Activated CD8-positive, alpha-beta T cell treated with anti-CD3 and anti-CD28 coated beads, Interleukin-2, amount 10 ng/mL, durations not matched to agents 7 days and 5 days (primary cell): ENCODE measurements at regions of chr18 and their contacts with region 1.

Region 1: DNA sequence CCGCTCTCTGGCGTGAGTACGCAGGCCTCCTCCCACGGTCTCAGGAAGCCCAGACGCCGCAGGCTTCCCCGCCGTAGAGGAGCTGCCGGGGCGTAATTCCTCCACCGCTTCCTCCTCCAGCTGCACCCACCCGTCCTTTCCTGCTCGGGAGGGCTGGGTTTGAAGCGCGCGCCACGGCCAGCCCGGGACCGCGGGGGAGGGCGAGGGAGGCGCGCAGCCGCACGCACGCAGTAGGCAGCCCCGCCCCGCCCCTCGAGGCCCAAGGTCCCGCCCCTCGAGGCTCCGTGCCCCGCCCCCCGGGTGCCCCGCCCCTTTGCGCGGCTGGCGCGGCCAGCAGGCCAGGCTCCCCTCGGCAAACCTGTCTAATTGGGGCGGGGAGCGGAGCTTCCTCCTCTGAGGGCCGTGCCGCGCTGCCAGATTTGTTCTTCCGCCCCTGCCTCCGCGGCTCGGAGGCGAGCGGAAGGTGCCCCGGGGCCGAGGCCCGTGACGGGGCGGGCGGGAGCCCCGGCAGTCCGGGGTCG is at the start of gene MALT1:
- DNase-seq: peak; percentile 96
- ATAC-seq: peak; percentile 92
- H3K4me3 Mint-ChIP-seq: peak within 1 kb of the TSS; percentile 98
- H3K27ac Mint-ChIP-seq: peak within 1 kb of the TSS; percentile 97
- H3K4me1 Mint-ChIP-seq: peaks cover 56% of the 10 kb centered on the region
- H3K27me3 Mint-ChIP-seq: no peaks in the 10 kb centered on the region
- total RNA-seq, gene MALT1: 52.7 to 57.1 TPM

Region 2: DNA sequence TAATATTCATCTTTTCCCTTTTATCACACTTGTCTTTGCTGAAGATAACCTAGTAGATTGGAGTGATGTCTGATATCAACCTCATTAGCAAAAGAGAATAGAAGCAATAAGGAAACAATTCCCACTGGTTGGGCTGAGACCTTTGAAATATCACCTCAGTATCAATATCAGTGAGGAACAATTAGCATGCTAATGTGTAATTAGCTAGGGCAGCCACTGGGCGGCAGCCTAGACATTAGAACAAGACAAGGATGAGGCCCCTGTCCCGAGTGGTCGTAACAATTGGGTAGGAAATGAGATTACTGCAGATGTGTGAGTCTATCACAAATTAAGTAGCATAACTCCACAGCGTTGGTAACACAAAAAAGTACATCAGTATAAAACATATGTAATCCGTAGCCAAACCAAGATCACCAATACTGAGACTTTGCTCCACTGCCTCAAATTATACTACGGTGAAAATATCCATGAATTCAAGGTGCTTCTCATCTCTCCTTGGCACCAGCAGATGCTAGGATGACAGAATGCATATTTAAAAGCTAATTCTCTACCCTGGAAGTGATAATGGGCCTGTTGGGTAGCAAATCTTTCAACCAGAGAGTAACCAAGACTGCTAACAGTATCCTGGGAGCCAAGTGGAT is 141.3 kb before region 1 on chr18:
- CTCF ChIA-PET with region 1: interaction called, 11 read pairs
- POLR2A ChIA-PET with region 1: interaction called, 6 read pairs
- DNase-seq: peak; percentile 76
- ATAC-seq: no peak
- H3K4me3 Mint-ChIP-seq: no peak overlapping the region
- H3K27ac Mint-ChIP-seq: no peak overlapping the region
- H3K4me1 Mint-ChIP-seq: peaks cover 10% of the 10 kb centered on the region
- H3K27me3 Mint-ChIP-seq: peaks cover 21% of the 10 kb centered on the region

Region 3: DNA sequence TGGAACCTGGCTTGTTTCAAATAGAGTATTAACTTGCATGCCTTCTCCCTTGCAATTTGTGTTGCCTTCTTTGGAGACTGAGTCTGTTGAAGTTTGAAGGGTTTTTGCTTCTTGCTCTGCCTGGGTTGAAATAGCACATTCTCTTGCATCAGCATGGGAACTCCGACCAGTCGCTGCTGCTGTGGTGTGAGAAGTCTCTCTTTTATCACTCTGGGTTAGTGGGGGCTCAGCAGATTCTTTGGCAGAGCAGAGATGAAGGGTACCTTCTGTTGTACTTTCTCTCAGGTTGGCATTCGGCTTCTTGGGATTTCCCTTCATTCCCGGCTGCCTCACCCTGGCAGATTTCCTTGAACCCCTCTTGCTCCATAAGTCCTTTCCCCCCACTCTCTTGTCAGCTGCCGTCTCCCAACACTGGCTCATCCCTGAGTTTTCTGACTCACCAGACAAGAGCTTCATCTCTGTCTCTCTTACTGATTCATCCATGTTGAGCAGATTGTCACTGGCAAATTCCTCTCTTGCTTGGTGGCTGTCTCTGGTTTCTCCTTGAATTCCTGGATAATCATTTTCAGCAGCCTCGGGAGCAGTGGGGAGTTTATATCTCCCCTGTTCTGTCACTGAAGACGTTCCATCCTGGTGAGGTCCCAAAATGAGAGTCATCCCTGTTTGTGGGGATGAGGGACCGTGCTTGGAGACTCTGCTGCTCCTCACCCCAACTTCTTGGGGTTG is 92.2 kb before region 1 on chr18:
- CTCF ChIA-PET with region 1: no interaction called
- POLR2A ChIA-PET with region 1: no interaction called
- DNase-seq: no peak
- ATAC-seq: no peak
- H3K4me3 Mint-ChIP-seq: no peak overlapping the region
- H3K27ac Mint-ChIP-seq: no peak overlapping the region
- H3K4me1 Mint-ChIP-seq: peaks cover 6% of the 10 kb centered on the region
- H3K27me3 Mint-ChIP-seq: peaks cover 6% of the 10 kb centered on the region

Region 4: DNA sequence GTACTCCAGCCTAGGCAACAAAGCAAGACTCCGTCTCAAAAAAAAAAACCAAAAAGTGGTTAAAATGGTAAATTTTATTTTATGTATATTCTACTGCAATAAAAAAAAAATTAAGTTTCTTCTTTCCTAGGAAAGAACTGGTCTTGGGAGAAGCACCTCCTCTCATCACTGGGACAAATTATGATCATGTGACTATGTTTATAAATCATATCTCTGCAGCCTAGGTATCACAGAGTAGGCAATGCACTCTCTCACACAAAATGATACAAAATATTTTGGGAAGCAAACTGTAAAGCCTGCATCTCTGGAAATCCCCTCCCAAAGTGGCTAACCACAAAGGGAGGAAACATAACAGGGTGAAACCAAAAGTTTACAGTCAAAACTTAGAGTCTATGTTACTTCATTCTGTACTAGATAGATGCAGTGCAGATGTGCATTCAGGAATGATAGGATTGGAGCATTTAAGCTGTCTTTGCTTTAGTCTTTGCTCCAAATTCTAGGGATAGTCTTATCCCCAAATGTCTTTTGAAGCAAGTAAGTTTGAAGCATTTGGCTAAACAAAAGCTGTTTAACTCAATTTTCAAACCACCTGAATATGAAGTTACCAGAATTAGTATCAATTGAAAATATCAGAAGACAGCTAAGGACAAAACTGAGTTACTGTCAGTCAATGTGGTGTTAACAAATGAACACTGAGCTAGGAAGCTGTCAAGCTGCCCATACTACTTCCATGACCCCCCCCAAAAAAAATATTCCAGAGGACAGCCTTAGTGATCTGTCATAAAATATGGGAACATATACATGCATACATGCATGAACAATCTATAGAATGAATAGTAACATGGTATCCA is 21.0 kb before region 1 on chr18:
- CTCF ChIA-PET with region 1: interaction called, 7 read pairs
- POLR2A ChIA-PET with region 1: interaction called, 85 read pairs
- DNase-seq: peak; percentile 53
- ATAC-seq: peak; percentile 86
- H3K4me3 Mint-ChIP-seq: peak overlapping the region; percentile 38
- H3K27ac Mint-ChIP-seq: peak overlapping the region; percentile 54
- H3K4me1 Mint-ChIP-seq: peaks cover 46% of the 10 kb centered on the region
- H3K27me3 Mint-ChIP-seq: no peaks in the 10 kb centered on the region

Region 5: DNA sequence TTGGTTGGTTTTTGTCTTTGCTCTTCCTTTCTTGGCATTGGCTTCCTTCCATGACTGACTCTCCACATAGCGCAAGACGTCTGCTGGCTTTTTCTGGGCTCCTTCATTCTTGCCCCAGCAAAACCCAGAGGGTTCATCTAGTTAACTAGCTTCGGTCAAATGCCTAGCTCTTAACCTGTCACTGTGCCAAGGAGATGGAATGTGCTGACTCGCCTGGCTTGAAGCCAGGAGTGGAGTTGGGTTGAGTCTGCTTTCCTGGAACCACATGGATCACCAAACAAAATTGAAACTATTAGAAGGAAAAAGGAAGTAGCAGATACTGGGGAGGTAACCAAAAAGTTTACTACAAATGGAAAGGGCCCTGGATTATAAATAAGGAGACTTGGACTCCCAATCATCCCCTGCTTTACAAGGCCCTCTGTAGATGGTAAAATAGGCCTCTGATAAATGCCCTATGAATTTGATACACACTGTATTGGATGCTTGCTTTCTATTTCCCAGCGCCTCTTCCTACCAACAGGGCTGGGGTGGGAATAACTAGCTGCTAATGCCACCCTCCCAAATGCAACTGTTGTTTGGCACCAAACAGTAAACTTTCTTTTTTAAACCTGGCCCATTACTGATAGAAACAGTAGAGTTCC is 11.4 kb after region 1 on chr18:
- CTCF ChIA-PET with region 1: interaction called, 6 read pairs
- POLR2A ChIA-PET with region 1: interaction called, 75 read pairs
- DNase-seq: no peak
- ATAC-seq: no peak
- H3K4me3 Mint-ChIP-seq: no peak overlapping the region
- H3K27ac Mint-ChIP-seq: no peak overlapping the region
- H3K4me1 Mint-ChIP-seq: peaks cover 40% of the 10 kb centered on the region
- H3K27me3 Mint-ChIP-seq: no peaks in the 10 kb centered on the region

Region 6: DNA sequence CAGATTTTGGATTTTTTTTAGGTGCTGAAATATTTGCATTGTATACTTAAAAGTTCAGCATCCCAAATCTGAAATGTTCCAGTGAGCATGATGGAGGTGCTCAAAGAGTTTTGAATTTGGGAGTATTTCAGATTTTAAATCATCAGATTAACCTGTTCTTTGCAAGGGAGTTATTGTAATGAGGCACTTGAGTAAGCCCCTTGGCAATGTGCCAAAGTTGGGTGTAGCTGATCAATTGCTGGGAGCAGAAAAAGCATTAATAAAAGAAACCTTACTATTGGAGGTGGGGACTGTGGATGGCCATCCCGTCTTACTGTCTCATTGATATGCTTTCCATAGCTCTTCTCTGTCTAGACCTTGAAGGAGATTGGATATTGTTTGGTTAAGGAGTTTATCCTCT is 28.4 kb after region 1 on chr18:
- CTCF ChIA-PET with region 1: interaction called, 5 read pairs
- POLR2A ChIA-PET with region 1: interaction called, 15 read pairs
- DNase-seq: no peak
- ATAC-seq: no peak
- H3K4me3 Mint-ChIP-seq: no peak overlapping the region
- H3K27ac Mint-ChIP-seq: no peak overlapping the region
- H3K4me1 Mint-ChIP-seq: peaks cover 35% of the 10 kb centered on the region
- H3K27me3 Mint-ChIP-seq: no peaks in the 10 kb centered on the region

Region 7: DNA sequence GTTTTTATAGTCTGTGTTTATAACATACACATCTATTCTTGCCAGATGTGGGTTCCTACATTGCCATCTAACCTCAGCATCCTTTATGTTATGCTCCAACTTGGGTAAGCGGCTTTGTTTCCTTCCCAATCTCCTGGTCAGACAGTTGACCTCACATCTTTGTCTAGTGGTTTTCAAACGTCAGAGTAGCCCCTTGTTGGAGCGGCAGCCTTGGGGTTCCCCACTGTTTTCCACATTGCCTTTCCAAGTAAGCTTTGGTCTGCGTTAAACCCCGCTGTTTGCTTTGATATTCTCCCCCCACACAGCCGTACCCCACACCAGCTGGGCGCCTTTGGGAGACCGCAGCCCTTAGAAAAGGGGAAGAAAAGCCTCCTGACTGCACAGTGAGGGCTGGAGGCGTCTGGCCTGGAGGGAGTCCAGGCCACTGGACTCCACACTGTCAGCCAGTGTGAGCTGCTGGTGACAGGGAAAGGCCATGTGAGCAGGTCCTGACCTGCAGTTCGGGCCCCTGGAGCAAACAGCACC is 83.4 kb after region 1 on chr18:
- CTCF ChIA-PET with region 1: no interaction called
- POLR2A ChIA-PET with region 1: interaction called, 10 read pairs
- DNase-seq: no peak
- ATAC-seq: peak; percentile 49
- H3K4me3 Mint-ChIP-seq: peak overlapping the region; percentile 23
- H3K27ac Mint-ChIP-seq: peak overlapping the region; percentile 75
- H3K4me1 Mint-ChIP-seq: peaks cover 43% of the 10 kb centered on the region
- H3K27me3 Mint-ChIP-seq: peaks cover 3% of the 10 kb centered on the region

Region 8: DNA sequence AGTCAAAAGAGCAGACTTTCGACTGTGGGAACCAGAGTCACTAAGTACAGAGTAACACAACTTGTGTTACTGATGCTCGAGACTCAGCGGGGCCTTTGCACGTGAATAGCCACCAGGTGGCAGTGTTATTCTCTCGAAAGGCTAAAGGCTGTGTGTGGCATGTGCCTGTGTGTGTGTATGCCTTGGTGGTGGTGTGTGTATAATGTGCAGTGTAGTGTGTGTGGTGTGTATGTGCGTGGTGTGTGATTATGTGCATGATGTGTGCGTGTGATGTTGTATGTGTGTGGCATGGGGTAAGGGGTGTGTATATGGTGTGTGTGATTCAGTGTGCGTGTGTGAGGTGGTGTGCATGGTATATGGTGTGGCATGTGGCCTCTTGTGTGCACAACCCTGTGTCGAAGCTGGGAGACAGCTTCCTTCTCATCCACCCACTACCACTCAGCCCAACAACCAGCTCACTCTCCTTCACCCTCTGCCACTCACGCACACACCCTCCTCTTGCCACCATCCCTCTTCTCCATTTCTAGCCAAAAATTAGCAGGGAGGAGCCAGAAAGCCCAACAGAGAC is 110.5 kb after region 1 on chr18:
- CTCF ChIA-PET with region 1: no interaction called
- POLR2A ChIA-PET with region 1: no interaction called
- DNase-seq: peak; percentile 78
- ATAC-seq: peak; percentile 89
- H3K4me3 Mint-ChIP-seq: no peak overlapping the region
- H3K27ac Mint-ChIP-seq: no peak overlapping the region
- H3K4me1 Mint-ChIP-seq: no peaks in the 10 kb centered on the region
- H3K27me3 Mint-ChIP-seq: peaks cover 8% of the 10 kb centered on the region

Region 9: DNA sequence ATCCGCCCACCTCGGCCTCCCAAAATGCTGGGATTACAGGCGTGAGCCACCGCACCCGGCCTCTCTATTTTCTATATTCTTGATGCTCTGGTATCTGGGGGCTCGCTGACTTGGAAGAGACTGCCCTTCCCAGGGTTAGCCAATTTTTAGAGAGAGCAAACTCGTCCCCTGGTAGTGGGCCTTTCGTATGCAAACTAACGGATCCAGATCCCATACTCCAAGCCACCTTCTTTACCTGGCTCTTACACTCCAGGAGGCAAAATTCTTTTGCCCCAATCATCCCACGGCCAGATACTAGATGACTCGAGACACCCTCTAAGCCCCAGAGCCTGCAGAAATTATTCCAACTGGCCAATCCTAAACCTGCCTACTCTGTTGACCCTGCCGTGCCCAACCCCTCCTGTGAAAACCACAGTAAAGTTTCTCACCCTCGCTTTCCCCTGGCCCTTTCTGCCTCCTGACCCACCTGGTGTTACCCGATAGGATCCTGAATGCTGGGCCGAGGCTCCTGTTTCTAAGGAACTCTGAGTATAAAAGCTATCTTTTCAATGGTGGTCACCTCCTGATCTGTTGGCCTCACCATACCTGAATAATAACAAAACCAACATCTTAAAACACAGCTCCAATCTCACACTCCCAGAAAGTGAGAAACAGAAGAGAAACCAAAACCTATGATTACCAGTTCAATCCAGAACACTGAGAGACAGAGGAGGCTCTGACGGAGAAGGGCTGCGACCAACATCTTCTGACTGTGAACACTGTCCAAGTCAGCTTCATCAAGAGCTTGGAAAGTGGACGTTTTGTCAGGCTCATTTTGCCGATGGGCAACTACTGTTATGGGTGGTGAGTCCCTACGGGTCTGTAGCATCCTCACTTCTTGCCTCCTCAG is 135.9 kb after region 1 on chr18:
- CTCF ChIA-PET with region 1: no interaction called
- POLR2A ChIA-PET with region 1: no interaction called
- DNase-seq: no peak
- ATAC-seq: no peak
- H3K4me3 Mint-ChIP-seq: no peak overlapping the region
- H3K27ac Mint-ChIP-seq: no peak overlapping the region
- H3K4me1 Mint-ChIP-seq: no peaks in the 10 kb centered on the region
- H3K27me3 Mint-ChIP-seq: peaks cover 32% of the 10 kb centered on the region